Activated T-helper 2 cell treated with anti-CD3 and anti-CD28 coated beads, Interferon-gamma antibody, Interleukin-2, Interleukin-4, amounts not matched to agents 10 μg/mL and 5 μg/mL and 100 μg/mL, durations not matched to agents 14 hours and 24 hours and 36 hours (primary cell): ENCODE measurements at regions of chr1 and their contacts with region 1.

Region 1: DNA sequence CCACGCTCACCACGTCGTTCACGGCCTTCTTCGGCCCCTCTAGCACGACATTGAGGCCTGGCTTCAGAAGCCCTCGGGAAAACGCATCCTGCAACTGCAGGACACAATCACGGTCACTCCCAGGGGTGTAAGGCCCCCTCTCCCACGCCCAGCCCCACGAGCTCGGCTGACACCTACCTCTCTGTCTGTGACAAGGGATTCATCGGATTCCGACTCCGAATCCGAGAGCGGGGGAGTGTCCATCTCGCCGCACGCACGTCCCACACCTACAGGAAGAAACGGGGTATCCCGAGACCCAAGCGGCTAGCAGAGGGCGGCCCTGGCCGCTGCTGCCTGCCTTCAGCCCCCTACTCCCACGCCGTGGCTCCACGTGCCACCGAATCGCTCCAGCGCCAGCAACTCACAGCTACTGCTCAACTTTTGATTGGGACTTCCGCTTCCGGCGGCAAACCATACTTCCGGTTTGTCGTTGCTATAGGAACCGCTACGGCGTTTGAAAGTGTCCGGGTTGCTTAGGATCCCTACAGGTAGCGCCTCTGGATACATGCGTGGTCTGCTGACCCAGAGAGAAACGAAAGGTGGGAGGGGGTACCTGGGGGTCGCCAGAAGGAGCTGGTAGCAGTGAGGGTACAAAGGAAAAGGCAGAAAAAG is at the starts of genes CFAP57 and EBNA1BP2:
- DNase-seq: peak; percentile 90
- H3K4me3 Mint-ChIP-seq: peak within 1 kb of the TSS; percentile 96
- H3K27ac Mint-ChIP-seq: peak within 1 kb of the TSS; percentile 87
- H3K4me1 Mint-ChIP-seq: peaks cover 25% of the 10 kb centered on the region
- H3K27me3 Mint-ChIP-seq: peaks cover 18% of the 10 kb centered on the region
- total RNA-seq, gene CFAP57: 0.11 and 0.16 TPM in 2 replicates
- total RNA-seq, gene EBNA1BP2: 102 and 104 TPM in 2 replicates

Region 2: GRCh38 chr1:43454266-43455011 is 282.4 kb after region 1 on chr1:
- intact Hi-C with region 1: loop called (anchors 2 kb)
- DNase-seq: peak; percentile 71
- H3K4me3 Mint-ChIP-seq: peak overlapping the region; percentile 82
- H3K27ac Mint-ChIP-seq: peak overlapping the region; percentile 84
- H3K4me1 Mint-ChIP-seq: peaks cover 17% of the 10 kb centered on the region
- H3K27me3 Mint-ChIP-seq: peaks cover 26% of the 10 kb centered on the region